GM18951 (cell line): ENCODE measurements at regions of chr7 and their contacts with region 1.

Region 1: DNA sequence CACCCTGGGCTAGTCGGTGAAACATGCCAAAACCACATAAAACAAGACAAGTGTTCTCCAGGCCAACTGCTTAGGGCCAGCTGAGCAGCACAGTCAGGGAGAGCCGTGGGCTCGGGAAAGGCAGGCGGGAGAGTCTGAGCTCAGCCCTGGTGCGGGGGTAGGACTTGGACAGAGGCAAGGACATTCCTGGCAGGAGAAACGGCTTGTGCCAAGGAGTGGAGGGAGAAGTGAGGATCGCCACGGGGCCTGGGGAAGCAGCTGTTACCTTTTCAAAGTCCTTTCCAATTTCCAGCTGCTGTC is 4.2 kb downstream of the ELN start:
- POLR2A ChIP-seq: no peak

Region 2: GRCh38 chr7:73547841-73548240 is 484.3 kb before region 1 on chr7:
- in situ Hi-C with region 1: no loop called
- POLR2A ChIP-seq: no peak

Region 3: DNA sequence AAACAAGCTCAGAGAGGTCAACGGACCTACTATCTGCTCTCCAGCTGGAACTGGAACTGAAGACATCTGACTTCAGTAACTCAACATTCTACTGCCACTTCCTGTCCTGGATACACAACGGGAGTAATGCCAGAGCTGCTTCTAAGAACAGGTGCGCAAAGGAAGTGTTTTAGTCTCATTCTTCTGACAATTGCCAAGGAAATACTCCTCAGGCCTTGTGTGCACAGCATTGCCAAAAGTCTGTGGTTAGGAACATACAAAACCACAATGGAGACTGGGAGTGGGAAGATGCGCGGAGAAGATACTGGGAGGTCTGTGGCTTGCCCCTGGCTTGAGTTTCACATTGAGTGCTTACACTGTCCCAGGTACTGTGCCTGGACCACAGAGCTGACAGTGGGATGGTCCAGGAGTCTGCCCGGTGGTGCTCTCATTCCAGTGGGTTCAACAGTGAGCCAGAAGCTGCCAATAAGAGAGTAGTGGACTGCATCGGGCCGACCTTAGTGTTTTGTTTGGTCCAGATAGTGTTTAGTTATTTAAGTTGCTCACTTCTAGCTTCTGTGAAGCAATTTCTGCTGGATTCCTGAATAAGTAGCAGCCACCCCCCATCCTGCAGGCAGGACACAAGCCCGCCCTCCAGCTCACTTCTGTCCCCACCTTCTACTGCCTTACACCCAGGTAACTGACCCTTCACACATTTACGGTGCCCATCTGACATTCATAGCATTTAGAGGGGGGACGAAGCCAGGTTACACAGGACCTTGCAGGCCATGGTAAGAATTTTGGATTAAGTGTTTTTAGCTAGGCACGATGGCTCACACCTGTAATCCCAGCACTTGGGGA is 464.1 kb before region 1 on chr7:
- in situ Hi-C with region 1: no loop called
- POLR2A ChIP-seq: no peak

Region 4: GRCh38 chr7:73865738-73866445 is 166.2 kb before region 1 on chr7:
- in situ Hi-C with region 1: loop called (anchors 10 kb)
- POLR2A ChIP-seq: no peak